ENCODE measurements at regions of chr5 and their contacts with region 1.

Region 1: DNA sequence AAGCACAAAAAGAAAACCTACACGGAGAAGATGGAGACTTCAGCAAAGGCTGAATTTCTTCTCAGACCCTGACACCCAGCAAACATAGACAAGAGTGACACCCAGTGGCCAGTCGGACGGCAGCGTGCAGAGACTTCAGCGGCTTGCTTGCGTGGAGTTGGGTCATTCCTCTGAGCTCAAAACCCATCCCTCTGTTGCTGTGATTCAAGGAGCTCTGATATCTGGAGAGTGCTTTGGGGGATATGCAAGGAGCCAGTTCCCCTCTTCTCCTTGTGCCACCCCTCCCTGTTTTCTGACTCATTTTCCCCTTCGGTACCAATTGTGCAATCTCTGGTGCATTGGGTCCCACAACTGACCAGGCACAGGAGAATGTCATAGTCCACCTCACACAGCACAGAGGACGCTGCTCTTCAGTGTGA is 27.5 kb downstream of the SH3TC2 start:
- DNase-seq: peak; percentile 54
- CTCF ChIP-seq: peak; percentile 85

Region 2: GRCh38 chr5:148620696-148621095 is 414.7 kb before region 1 on chr5:
- CTCF ChIA-PET with region 1: no interaction called
- POLR2A ChIA-PET with region 1: no interaction called
- DNase-seq: no peak
- CTCF ChIP-seq: no peak

Region 3: DNA sequence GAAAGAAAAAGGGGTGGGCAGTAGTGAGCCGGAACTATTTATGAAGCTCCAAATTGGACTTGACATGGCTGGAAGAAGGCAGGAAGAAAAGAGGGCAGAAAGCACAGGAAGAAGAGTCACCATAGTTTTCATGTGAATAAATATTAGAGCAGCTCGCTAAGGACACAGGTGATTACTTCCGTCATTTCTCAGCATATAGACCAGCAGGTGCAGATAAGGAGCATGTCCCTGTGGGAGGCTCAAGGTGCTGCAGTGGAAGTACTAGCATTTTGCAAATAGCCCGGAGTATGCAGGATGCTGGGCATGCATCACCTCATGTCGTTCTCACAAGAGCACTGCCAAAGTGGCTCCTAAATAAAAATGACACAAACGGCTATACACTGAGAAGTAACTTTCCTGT is 309.7 kb before region 1 on chr5:
- CTCF ChIA-PET with region 1: interaction called, 386 read pairs
- POLR2A ChIA-PET with region 1: no interaction called
- DNase-seq: no peak
- CTCF ChIP-seq: no peak

Region 4: DNA sequence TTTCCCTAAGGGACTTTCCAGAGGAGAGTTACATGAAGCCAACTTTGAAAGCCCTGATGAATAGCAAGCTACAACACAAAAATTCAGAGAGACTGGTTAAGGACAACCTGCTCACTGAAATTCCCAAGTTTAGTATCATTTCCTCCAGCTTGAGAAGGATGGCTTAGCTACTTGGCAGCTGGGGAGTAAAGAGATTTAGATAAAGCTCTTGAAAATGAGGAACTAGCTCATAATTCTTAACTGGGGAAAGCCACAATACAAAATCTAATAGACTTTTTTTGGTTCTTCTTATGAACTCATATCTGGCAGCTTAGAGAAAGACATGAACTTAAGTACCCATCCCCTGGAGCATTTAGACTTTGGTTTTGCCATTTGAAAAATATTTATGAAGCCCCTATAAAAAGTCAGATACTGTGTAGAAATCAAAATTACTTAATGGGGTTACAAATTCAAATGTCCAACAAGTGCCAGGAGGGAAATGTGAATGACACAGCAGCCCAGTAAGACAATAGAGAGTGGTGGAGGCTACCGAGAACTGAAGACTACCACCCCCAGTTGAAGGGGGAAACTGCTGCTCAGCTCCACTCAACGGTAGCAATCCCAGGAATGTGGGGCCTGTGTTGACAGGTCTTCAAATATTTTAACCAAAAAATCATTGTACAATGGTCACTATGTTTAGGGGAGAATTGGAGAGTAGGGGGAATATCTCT is 288.4 kb before region 1 on chr5:
- CTCF ChIA-PET with region 1: interaction called, 386 read pairs
- POLR2A ChIA-PET with region 1: no interaction called
- DNase-seq: peak; percentile 37
- CTCF ChIP-seq: no peak

Region 5: DNA sequence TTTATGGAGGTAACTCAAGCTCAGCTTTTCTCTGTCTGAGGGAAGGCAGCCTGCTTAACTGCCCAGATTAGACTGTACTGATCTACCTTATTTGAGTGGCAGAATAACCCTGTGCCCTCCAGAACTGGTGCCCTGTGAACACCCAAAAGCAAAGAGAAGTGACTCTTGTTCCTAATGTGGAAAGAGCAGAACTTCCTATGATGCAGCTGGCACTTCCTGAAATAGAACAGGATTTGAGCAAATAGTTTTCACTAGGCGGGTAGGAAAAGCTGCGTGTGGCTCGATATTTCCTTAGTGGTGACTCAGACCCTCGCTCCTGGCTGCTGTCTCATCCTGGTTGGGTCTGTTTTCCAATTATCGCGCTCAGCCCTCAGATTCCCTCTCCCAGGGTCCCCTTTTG is 62.4 kb before region 1 on chr5:
- CTCF ChIA-PET with region 1: no interaction called
- POLR2A ChIA-PET with region 1: no interaction called
- DNase-seq: no peak
- CTCF ChIP-seq: no peak

Region 6: DNA sequence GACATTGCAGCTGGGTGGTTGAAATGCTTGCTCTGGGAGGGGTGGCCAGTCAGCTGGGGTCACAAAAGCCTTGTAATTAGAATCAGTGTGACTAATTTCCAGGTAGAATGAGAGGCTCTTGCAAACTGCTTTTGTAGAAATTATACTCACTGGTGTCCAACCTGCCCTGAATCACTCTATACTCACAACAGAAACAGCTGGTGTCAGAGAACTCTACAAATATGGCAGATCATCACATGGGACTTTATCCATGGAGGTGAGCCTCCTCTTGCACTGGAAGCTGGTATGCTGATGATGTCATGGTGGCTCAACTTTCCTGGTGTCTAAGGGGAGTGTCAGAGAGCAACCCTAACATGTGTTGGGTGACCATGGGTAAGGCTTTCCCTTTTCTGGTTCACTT is 43.8 kb before region 1 on chr5:
- CTCF ChIA-PET with region 1: no interaction called
- POLR2A ChIA-PET with region 1: no interaction called
- DNase-seq: no peak
- CTCF ChIP-seq: no peak

Region 7: DNA sequence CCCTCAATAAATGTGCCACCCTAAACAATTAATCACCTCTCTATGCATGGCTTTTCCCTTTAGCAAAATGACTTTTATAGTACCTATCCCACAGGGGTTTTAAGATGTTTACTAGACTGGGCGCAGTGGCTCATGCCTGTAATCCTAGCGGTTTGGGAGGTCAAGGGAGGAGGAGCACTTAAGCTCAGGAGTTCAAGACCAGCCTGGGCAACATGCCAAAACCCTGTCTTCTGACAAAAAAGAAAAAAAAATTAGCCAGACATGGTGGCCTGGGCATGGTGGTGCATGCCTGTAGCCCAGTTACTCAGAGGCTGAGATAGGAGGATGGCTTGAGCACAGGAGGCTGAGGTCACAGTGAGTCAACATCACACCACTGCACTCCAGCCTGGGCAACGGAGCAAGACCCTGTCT is 14.0 kb after region 1 on chr5:
- CTCF ChIA-PET with region 1: interaction called, 24 read pairs
- POLR2A ChIA-PET with region 1: no interaction called
- DNase-seq: no peak
- CTCF ChIP-seq: no peak

Region 8: DNA sequence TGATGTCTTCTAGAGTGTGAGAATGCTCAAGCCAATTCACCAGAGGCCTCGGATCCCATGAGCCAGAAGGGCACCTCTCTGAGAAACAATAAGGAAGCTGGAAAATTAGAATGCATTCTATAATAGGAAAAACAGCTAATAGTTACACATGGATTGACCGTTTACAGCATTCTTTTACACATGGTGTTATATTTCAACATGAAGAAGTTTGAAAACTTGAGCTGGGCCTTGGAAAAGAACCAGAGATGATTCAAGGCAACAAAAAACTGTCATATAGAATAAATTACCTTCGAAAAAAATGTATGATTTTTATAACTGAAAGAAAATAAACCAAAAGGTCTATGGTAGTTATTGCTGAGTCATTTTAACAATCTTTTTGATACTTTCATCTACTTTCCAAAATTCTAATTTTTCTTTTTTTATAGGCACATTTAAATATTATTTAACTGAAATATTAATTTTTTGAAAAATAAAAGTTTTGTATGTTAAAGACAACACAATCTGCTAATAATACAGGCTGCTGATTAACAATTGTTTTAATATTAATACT is 21.3 kb after region 1 on chr5:
- CTCF ChIA-PET with region 1: interaction called, 21 read pairs
- POLR2A ChIA-PET with region 1: no interaction called
- DNase-seq: no peak
- CTCF ChIP-seq: no peak

Measured in GM10248 (cell line).